ENCODE measurements at regions of chr3 and their contacts with region 1.

Region 1: DNA sequence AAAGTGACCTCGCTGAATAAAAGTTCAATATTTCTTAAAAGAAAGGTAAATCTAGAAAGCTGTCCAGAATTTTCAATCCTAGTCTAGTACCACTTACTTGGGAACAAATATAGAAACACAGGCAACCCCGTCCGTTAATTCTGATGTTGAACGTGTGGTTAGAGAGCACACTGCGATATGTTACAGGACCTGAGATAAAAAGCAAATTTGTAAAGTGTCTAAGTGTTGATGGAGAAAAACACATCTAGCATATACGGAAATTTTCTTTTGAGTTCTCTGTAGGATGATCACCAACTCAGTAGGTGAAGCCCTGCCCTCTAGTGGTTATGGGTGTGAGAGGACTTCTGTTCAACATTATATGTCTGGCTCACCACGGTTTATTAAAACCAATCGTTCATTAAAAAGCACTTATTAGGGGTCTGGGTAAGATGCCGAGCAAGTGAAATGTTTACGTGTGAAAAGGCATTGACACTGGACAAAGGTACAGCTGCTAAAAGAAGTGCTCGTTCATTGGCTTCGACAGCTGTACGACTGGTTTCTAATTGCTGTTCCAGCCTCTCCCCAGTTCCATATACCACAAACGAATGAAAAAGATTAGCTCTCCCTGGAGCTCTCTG is 1.0 kb upstream of the ATP2C1 start:
- DNase-seq: peak; percentile 70
- H3K4me3 ChIP-seq: peak overlapping the region; percentile 87 to 97
- H3K27ac ChIP-seq: peak overlapping the region; percentile 91 to 94
- H3K4me1 ChIP-seq: peaks cover 2 to 5% of the 10 kb centered on the region in 2 experiments; a peak in 3 of 4 replicates
- H3K27me3 ChIP-seq: no peaks in the 10 kb centered on the region
- CTCF ChIP-seq: peak; percentile 95
- EP300 ChIP-seq: no peak
- RAD21 ChIP-seq: peak; percentile 89

Region 2: DNA sequence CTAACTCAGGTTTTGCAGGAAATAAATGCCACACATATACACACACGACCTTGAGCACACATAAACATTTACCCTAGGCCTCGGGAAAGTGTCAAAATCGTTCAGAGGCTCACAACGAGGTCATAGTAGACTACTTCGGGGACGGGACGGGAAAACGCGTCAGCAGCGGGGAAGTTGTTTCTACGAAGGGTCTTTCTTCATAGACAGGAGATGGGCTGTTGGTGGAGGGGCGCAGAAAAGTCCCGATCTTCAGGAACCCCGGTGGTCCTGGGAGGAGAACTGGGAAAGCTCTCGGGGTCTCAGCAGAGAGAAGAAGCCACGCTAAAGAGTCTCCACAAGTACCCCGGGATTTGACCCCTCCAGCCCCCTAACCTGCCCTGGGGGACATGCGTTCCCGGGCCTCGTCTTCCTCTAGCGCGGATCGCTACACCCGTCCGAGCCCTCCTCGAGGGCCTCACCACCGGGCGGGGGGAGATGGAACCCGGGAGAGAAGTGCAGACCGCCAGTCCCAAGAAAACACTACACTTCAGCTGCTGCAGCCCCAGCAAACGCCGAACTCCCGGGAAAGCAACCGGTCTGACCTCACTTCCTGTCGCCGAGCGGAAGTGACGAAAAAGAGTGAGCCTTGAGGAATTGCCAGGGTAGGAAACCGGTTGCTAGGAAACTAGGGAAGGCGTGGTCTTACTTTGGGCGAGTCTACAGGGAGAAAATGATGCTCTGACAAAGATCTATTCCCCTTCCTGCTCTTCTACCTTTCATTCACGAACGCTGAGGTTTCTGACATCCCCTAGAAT is 146.4 kb before region 1 on chr3 and contains the start of gene PIK3R4:
- CTCF ChIA-PET with region 1: interaction called, 10 read pairs
- POLR2A ChIA-PET with region 1: interaction called, 5 read pairs
- DNase-seq: peak; percentile 91
- H3K4me3 ChIP-seq: peak within 1 kb of the TSS; percentile 97 to 99
- H3K27ac ChIP-seq: peak within 1 kb of the TSS; percentile 75 to 80
- H3K4me1 ChIP-seq: peaks cover 11 to 19% of the 10 kb centered on the region in 2 experiments; a peak in 3 of 4 replicates
- H3K27me3 ChIP-seq: no peaks in the 10 kb centered on the region
- CTCF ChIP-seq: no peak
- EP300 ChIP-seq: no peak
- RAD21 ChIP-seq: no peak
- polyA plus RNA-seq, gene PIK3R4: 27.2 and 27.9 TPM in 2 replicates

Region 3: GRCh38 chr3:130759699-130760338 is 133.0 kb before region 1 on chr3:
- CTCF ChIA-PET with region 1: interaction called, 112 read pairs
- POLR2A ChIA-PET with region 1: interaction called, 3 read pairs
- DNase-seq: peak; percentile 55
- H3K4me3 ChIP-seq: peak overlapping the region in 1 of 2 experiments; percentile 15; a peak in 1 of 4 replicates
- H3K27ac ChIP-seq: no peak overlapping the region; a peak in 1 of 4 replicates
- H3K4me1 ChIP-seq: no peaks in the 10 kb centered on the region; a peak in 1 of 4 replicates
- H3K27me3 ChIP-seq: 0 out of 2 replicates have a peak, but pooled peaks cover 5% of the 10 kb centered on the region
- CTCF ChIP-seq: peak; percentile 90
- EP300 ChIP-seq: no peak
- RAD21 ChIP-seq: peak; percentile 90

Region 4: DNA sequence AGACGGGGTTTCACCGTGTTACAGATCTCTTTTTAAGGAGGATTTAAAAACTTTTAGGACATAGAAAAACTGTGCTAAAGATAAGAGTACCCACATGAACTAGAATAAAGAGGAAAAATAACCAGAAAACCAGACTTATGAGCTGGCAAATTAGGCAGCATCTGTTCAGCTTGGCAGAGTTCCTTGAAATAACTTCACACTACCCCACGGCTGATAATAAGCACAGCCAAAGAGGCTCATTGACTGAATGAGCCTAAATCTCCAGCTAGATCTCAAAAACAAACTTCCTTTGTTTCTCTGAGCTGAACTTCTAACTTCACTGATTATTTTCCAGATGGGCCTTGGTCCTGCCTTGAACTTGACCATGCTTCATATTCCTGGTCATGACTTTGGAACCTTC is 119.5 kb before region 1 on chr3:
- CTCF ChIA-PET with region 1: interaction called, 10 read pairs
- POLR2A ChIA-PET with region 1: no interaction called
- DNase-seq: no peak
- H3K4me3 ChIP-seq: no peak overlapping the region
- H3K27ac ChIP-seq: no peak overlapping the region
- H3K4me1 ChIP-seq: no peaks in the 10 kb centered on the region
- H3K27me3 ChIP-seq: no peaks in the 10 kb centered on the region
- CTCF ChIP-seq: no peak
- EP300 ChIP-seq: no peak
- RAD21 ChIP-seq: no peak

Region 5: DNA sequence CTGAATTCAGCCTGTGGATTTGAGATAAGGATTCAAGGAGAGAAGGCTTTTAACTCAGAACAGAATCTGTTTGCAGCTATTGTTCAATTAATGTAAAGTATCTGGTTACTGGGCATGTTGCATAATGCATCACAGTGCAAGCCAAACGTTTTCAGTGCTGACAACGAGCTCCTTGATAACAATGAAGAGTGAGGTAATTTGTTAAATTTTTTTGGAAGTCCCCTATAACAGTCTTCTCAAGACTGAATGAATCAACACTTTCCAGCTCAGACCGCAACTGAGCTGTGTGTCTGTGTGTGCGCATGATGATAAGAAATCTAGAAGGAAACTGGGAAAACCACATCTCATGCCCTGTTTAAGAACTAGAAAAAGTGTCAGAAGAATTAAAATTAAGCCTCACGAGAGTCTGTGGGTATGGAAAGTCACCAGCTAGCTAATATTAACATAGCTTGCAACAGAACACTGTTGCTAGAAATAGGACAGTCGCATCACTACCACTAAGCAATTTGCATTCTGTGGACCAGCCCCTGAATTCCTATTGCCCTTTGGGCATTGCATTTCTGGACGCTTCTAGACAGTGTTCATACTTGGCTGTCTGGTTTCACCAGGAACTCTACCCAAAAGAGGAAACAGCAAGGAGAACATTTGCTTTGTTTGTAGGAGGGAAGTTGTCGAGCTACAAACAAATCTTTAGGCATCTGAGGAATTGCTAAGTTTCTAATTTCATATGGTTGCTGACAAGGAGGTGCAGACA is 42.6 kb before region 1 on chr3:
- CTCF ChIA-PET with region 1: interaction called, 13 read pairs
- POLR2A ChIA-PET with region 1: no interaction called
- DNase-seq: peak; percentile 38
- H3K4me3 ChIP-seq: peak overlapping the region in 1 of 2 experiments; percentile 37; a peak in 3 of 4 replicates
- H3K27ac ChIP-seq: peak overlapping the region in 1 of 2 experiments; percentile 78; a peak in 2 of 4 replicates
- H3K4me1 ChIP-seq: peaks cover 5 to 22% of the 10 kb centered on the region in 2 experiments; a peak in 3 of 4 replicates
- H3K27me3 ChIP-seq: no peaks in the 10 kb centered on the region; the same call in 1 of the 2 replicates
- CTCF ChIP-seq: no peak
- EP300 ChIP-seq: peak in 1 of 2 experiments; percentile 28; a peak in 1 of 4 replicates
- RAD21 ChIP-seq: peak; percentile 2; the same call in 1 of the 2 replicates

Region 6: DNA sequence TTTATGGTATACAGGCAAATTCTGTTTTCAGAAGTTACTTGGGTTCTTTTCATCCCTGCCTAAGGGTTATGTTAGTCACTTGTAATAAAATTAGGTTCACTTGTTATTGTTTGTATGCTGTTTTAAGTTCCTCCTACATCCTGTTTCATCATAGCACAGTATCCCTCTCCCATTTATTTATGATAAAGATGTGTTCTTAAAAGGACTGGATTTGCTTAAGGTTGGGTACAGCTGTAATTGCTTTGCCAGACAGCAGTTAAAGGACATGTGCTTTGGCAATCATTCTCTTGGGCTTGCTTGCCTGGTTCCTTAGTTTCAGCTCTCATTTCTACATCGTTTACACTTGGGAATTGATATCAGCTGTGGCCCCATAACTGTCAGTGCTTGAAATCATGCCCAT is 12.7 kb after region 1 on chr3:
- CTCF ChIA-PET with region 1: interaction called, 17 read pairs
- POLR2A ChIA-PET with region 1: no interaction called
- DNase-seq: no peak
- H3K4me3 ChIP-seq: no peak overlapping the region
- H3K27ac ChIP-seq: peak overlapping the region in 1 of 2 experiments; percentile 58; a peak in 2 of 4 replicates
- H3K4me1 ChIP-seq: peaks cover 13 to 18% of the 10 kb centered on the region in 2 experiments; a peak in 3 of 4 replicates
- H3K27me3 ChIP-seq: no peaks in the 10 kb centered on the region
- CTCF ChIP-seq: no peak
- EP300 ChIP-seq: no peak
- RAD21 ChIP-seq: no peak

Region 7: GRCh38 chr3:130926504-130926903 is 33.6 kb after region 1 on chr3:
- CTCF ChIA-PET with region 1: interaction called, 13 read pairs
- POLR2A ChIA-PET with region 1: interaction called, 7 read pairs
- DNase-seq: no peak
- H3K4me3 ChIP-seq: no peak overlapping the region
- H3K27ac ChIP-seq: peak overlapping the region; percentile 78 to 98
- H3K4me1 ChIP-seq: peaks cover 9 to 27% of the 10 kb centered on the region in 2 experiments; a peak in 3 of 4 replicates
- H3K27me3 ChIP-seq: no peaks in the 10 kb centered on the region
- CTCF ChIP-seq: no peak
- EP300 ChIP-seq: no peak
- RAD21 ChIP-seq: no peak

Measured in SK-N-SH (cell line).